GM13977 (cell line): ENCODE measurements at regions of chr12 and their contacts with region 1.

Region 1: GRCh38 chr12:79737875-79738718 is 47.3 kb upstream of the PAWR start:
- DNase-seq: peak; percentile 50
- CTCF ChIP-seq: peak; percentile 76

Region 2: GRCh38 chr12:79407671-79408622 is 330.1 kb before region 1 on chr12:
- in situ Hi-C with region 1: loop called (anchors 25 kb)
- DNase-seq: peak; percentile 14
- CTCF ChIP-seq: peak; percentile 67

Region 3: GRCh38 chr12:79549497-79550271 is 188.4 kb before region 1 on chr12:
- in situ Hi-C with region 1: loop called (anchors 5 kb)
- DNase-seq: no peak
- CTCF ChIP-seq: no peak